HepG2 (cell line): ENCODE measurements at regions of chr10 and their contacts with region 1.

Region 1: GRCh38 chr10:92432596-92432995 is 141.3 kb downstream of the IDE start:
- DNase-seq: no peak
- ATAC-seq: no peak
- H3K4me3 ChIP-seq: no peak overlapping the region
- H3K27ac ChIP-seq: no peak overlapping the region
- H3K4me1 ChIP-seq: no peaks in the 10 kb centered on the region
- H3K27me3 ChIP-seq: no peaks in the 10 kb centered on the region
- CTCF ChIP-seq: no peak
- EP300 ChIP-seq: no peak
- POLR2A ChIP-seq: no peak
- RAD21 ChIP-seq: no peak

Region 2: DNA sequence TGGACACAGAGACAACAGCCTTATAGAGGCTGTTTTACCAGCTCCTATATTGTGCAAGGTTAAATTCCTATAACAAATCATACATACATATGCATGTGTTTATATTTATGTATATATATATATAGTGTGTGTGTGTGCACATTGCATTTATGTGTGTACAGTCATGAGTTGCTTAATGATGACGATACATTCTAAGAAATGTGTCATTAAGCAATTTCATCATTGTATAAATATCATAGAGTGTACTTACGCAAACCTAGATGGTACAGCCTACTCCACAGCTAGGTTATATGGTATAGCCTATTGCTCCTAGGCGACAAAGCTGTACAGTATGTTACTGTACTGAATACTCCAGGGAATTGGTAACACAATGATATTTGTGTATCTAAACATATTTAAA is 664.5 kb before region 1 on chr10:
- CTCF ChIA-PET with region 1: no interaction called
- POLR2A ChIA-PET with region 1: no interaction called
- in situ Hi-C with region 1: no loop called
- intact Hi-C with region 1: loop called (anchors 10 kb)
- DNase-seq: no peak
- ATAC-seq: no peak
- H3K4me3 ChIP-seq: no peak overlapping the region
- H3K27ac ChIP-seq: no peak overlapping the region
- H3K4me1 ChIP-seq: no peaks in the 10 kb centered on the region
- H3K27me3 ChIP-seq: no peaks in the 10 kb centered on the region
- CTCF ChIP-seq: no peak
- EP300 ChIP-seq: no peak
- POLR2A ChIP-seq: no peak
- RAD21 ChIP-seq: no peak

Region 3: DNA sequence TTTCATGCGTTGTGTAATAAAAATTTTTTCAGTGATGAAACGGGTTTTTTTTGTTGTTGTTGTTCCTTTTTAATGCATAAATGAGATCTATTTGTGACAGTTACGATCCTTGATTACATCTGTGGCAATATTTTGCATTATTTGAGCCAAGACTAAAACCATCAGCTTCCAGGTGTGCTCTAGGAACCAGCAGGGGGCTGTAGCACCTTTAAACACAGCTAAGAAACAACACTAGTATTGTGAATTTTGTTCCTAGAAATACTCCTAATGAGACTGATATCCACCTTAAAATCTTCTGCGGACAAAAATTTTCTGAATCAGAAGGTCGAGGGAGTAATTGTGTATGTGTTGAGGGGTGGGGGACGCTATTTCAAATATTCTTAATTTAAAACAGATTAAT is 576.0 kb before region 1 on chr10:
- CTCF ChIA-PET with region 1: no interaction called
- POLR2A ChIA-PET with region 1: no interaction called
- in situ Hi-C with region 1: loop called (anchors 25 kb)
- intact Hi-C with region 1: no loop called
- DNase-seq: peak; percentile 12
- ATAC-seq: peak; percentile 68
- H3K4me3 ChIP-seq: no peak overlapping the region
- H3K27ac ChIP-seq: no peak overlapping the region
- H3K4me1 ChIP-seq: no peaks in the 10 kb centered on the region
- H3K27me3 ChIP-seq: no peaks in the 10 kb centered on the region
- CTCF ChIP-seq: peak; percentile 51
- EP300 ChIP-seq: no peak
- POLR2A ChIP-seq: no peak
- RAD21 ChIP-seq: no peak; the same call in 1 of the 2 replicates

Region 4: GRCh38 chr10:92010047-92010735 is 422.4 kb before region 1 on chr10:
- CTCF ChIA-PET with region 1: no interaction called
- POLR2A ChIA-PET with region 1: no interaction called
- in situ Hi-C with region 1: no loop called
- intact Hi-C with region 1: loop called (anchors 1 kb)
- DNase-seq: peak; percentile 32
- ATAC-seq: peak; percentile 77
- H3K4me3 ChIP-seq: no peak overlapping the region
- H3K27ac ChIP-seq: peak overlapping the region; percentile 29
- H3K4me1 ChIP-seq: peaks cover 19% of the 10 kb centered on the region
- H3K27me3 ChIP-seq: no peaks in the 10 kb centered on the region
- CTCF ChIP-seq: no peak
- EP300 ChIP-seq: no peak
- POLR2A ChIP-seq: no peak
- RAD21 ChIP-seq: no peak

Region 5: DNA sequence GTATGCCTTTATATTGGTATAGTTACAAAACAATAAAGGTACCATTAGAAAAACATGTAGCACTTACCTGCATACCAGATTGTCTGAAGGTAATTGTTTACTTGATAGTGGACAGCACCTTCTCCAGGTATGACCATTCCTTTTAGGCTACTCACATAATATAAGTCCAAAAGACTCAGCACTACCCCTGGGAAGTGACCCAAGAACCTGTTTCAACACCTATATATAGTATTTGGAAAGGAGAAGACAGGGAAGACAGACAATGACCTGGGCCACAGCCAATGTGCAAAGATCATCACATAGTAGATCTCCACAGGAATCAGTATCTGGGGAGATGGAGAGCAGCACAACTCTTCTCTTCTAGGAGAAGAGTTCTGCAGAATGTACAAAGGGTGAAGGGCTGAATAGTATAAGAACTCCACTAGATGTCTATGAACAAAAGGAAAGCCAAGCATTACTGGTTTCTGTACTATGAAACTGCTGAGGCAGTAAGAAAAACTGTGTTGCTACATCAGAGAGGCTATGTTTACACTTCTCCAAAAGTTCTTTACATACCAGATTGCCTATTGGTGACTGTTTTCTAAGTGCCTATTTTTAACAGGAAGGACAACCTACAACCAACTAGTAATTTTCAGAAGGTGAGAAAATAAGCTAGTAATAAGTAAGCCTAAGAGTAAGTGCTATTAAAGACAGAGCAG is 349.9 kb before region 1 on chr10:
- CTCF ChIA-PET with region 1: interaction called, 20 read pairs
- POLR2A ChIA-PET with region 1: no interaction called
- in situ Hi-C with region 1: loop called (anchors 5 kb)
- intact Hi-C with region 1: loop called (anchors 1 kb)
- DNase-seq: peak; percentile 29
- ATAC-seq: peak; percentile 65
- H3K4me3 ChIP-seq: no peak overlapping the region
- H3K27ac ChIP-seq: no peak overlapping the region
- H3K4me1 ChIP-seq: peaks cover 18% of the 10 kb centered on the region
- H3K27me3 ChIP-seq: no peaks in the 10 kb centered on the region
- CTCF ChIP-seq: no peak
- EP300 ChIP-seq: no peak
- POLR2A ChIP-seq: no peak
- RAD21 ChIP-seq: no peak

Region 6: DNA sequence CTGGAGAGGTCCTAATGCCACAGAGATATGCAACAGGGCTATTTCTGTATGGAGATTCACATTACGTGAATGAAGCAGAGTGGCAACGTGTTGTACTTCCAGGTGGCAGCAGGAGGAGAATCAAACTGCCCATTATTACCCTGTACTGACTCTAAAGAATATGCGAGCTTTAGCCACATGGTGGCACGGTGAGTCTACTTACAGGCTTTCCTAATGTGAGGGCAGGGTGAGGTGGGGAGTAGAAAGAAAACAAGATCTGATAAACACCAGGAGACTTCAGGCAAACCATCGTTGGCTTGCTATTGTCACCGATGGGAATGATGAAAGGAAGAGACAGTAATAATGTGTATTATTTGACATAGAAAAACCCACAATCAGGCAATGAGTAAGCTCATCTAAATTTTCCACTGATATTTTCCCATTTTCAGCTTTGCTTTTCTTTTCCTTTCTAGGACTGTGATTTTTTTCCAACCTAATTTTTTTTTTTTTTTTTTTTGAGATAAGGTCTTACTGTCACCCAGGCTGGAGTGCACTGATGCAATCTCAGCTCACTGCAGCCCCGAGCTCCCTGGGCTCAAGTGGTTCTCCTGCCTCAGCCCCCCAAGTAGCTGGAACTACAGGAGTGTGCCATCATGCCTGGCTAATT is 344.7 kb before region 1 on chr10:
- CTCF ChIA-PET with region 1: interaction called, 20 read pairs
- POLR2A ChIA-PET with region 1: no interaction called
- in situ Hi-C with region 1: loop called (anchors 5 kb)
- intact Hi-C with region 1: loop called (anchors 1 kb)
- DNase-seq: peak; percentile 90
- ATAC-seq: peak; percentile 100
- H3K4me3 ChIP-seq: no peak overlapping the region
- H3K27ac ChIP-seq: no peak overlapping the region
- H3K4me1 ChIP-seq: peaks cover 20% of the 10 kb centered on the region
- H3K27me3 ChIP-seq: no peaks in the 10 kb centered on the region
- CTCF ChIP-seq: peak; percentile 94
- EP300 ChIP-seq: no peak; a peak in 1 of 4 replicates
- POLR2A ChIP-seq: no peak
- RAD21 ChIP-seq: peak; percentile 95

Region 7: GRCh38 chr10:92290837-92291615 is 141.6 kb before region 1 on chr10 and contains the starts of genes CPEB3 and MARCHF5:
- CTCF ChIA-PET with region 1: no interaction called
- POLR2A ChIA-PET with region 1: no interaction called
- in situ Hi-C with region 1: no loop called
- intact Hi-C with region 1: loop called (anchors 5 kb)
- DNase-seq: peak; percentile 93
- ATAC-seq: peak; percentile 98
- H3K4me3 ChIP-seq: peak within 1 kb of the TSS; percentile 90 to 100 (median 99)
- H3K27ac ChIP-seq: peak within 1 kb of the TSS; percentile 90
- H3K4me1 ChIP-seq: peaks cover 28% of the 10 kb centered on the region
- H3K27me3 ChIP-seq: no peaks in the 10 kb centered on the region; a peak in 2 of 5 replicates
- CTCF ChIP-seq: peak; percentile 72
- EP300 ChIP-seq: peak in 1 of 2 experiments; percentile 8; a peak in 1 of 4 replicates
- POLR2A ChIP-seq: peak; percentile 57 to 67; a peak in 3 of 4 replicates
- RAD21 ChIP-seq: peak; percentile 87
- total RNA-seq, gene CPEB3: 0.66 and 0.88 TPM in 2 replicates
- total RNA-seq, gene MARCHF5: 21.0 and 34.7 TPM in 2 replicates

Region 8: GRCh38 chr10:92366412-92367021 is 66.1 kb before region 1 on chr10:
- CTCF ChIA-PET with region 1: no interaction called
- POLR2A ChIA-PET with region 1: no interaction called
- in situ Hi-C with region 1: no loop called
- intact Hi-C with region 1: no loop called
- DNase-seq: no peak
- ATAC-seq: peak; percentile 35; the same call in 1 of the 3 replicates
- H3K4me3 ChIP-seq: no peak overlapping the region
- H3K27ac ChIP-seq: no peak overlapping the region
- H3K4me1 ChIP-seq: no peaks in the 10 kb centered on the region
- H3K27me3 ChIP-seq: no peaks in the 10 kb centered on the region
- CTCF ChIP-seq: peak; percentile 21
- EP300 ChIP-seq: no peak
- POLR2A ChIP-seq: no peak
- RAD21 ChIP-seq: no peak

Region 9: DNA sequence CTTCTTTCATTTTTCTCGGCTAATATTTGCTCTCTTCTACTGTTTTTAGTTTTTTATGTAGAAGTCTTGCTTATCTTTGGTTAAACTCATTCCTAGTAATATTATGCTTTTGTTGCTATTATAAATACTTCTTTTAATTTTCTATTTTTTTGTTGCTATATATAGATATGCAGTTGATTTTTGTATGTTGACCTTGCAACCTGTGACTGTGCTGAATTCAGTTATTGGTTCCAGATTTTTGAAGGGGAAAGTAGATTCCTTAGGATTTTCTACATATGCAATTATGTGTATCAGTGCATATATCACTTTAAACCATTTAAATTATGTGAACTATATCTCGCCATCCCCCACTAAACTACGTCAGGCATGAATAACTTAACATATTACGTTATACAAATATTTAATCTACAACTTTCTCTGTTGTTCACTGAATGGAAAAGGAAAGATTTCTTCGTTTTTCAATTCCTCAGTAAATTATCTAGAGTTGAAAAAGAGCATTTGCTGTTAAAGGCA is 69.8 kb after region 1 on chr10:
- CTCF ChIA-PET with region 1: no interaction called
- POLR2A ChIA-PET with region 1: no interaction called
- in situ Hi-C with region 1: no loop called
- intact Hi-C with region 1: no loop called
- DNase-seq: no peak
- ATAC-seq: no peak
- H3K4me3 ChIP-seq: no peak overlapping the region
- H3K27ac ChIP-seq: no peak overlapping the region
- H3K4me1 ChIP-seq: no peaks in the 10 kb centered on the region
- H3K27me3 ChIP-seq: no peaks in the 10 kb centered on the region
- CTCF ChIP-seq: no peak
- EP300 ChIP-seq: no peak
- POLR2A ChIP-seq: no peak
- RAD21 ChIP-seq: no peak

Region 10: DNA sequence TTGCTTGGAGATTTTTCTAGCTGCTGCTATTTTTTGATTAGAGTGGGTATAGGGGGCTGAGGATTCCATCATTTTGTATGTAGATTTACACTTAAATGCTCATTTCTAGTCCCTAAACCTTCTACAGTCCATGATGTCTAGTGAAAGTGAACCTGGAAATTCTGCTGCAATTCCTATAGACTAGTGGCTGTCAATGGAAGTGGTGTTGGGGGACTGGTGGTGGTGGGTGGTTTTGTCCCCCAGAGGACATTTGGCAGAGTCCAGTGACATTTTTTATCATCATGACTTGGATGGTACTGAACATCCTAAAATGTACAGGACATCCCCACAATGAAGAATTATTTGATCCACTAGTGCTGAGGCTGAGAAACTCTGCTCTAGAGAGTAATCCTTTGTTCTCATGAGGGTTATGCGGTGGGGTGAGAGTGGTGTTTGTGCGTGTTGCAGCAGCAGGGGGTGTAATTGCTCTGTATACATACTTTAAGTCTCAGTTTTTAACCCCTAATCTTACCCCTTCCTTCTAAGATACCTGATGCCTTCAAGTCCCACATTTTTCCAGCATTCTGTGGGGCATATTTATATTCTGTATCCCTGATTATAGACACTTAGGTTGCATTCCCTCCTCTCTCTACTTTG is 195.4 kb after region 1 on chr10:
- CTCF ChIA-PET with region 1: no interaction called
- POLR2A ChIA-PET with region 1: no interaction called
- in situ Hi-C with region 1: no loop called
- intact Hi-C with region 1: no loop called
- DNase-seq: no peak
- ATAC-seq: peak; percentile 58; the same call in 2 of the 3 replicates
- H3K4me3 ChIP-seq: no peak overlapping the region
- H3K27ac ChIP-seq: no peak overlapping the region
- H3K4me1 ChIP-seq: no peaks in the 10 kb centered on the region
- H3K27me3 ChIP-seq: no peaks in the 10 kb centered on the region; a peak in 1 of 5 replicates
- CTCF ChIP-seq: peak; percentile 32
- EP300 ChIP-seq: no peak
- POLR2A ChIP-seq: no peak
- RAD21 ChIP-seq: no peak